ENCODE measurements at regions of chr3 and their contacts with region 1.

Region 1: GRCh38 chr3:69410250-69410649 is 24.4 kb upstream of the FRMD4B start:
- DNase-seq: peak; percentile 65 to 83 (median 77)
- ATAC-seq: peak; percentile 78 to 86
- H3K4me3 ChIP-seq: no peak overlapping the region
- H3K27ac ChIP-seq: no peak overlapping the region
- H3K4me1 ChIP-seq: no peaks in the 10 kb centered on the region
- H3K27me3 ChIP-seq: no peaks in the 10 kb centered on the region

Region 2: GRCh38 chr3:69324362-69325025 is 85.8 kb before region 1 on chr3:
- intact Hi-C with region 1: loop called (anchors 5 to 10 kb)
- DNase-seq: no peak
- ATAC-seq: peak in 1 of 2 donors; percentile 40
- H3K4me3 ChIP-seq: no peak overlapping the region
- H3K27ac ChIP-seq: no peak overlapping the region
- H3K4me1 ChIP-seq: peaks cover 2% of the 10 kb centered on the region
- H3K27me3 ChIP-seq: no peaks in the 10 kb centered on the region

Measured in right cardiac atrium (tissue), 5 donors.